B cell (primary cell): ENCODE measurements at regions of chr19 and their contacts with region 1.

Region 1: GRCh38 chr19:4362861-4363510 is 19.6 kb downstream of the MPND start:
- DNase-seq: peak; percentile 48
- ATAC-seq: no peak
- H3K4me3 ChIP-seq: no peak overlapping the region
- H3K4me3 Mint-ChIP-seq: no peak overlapping the region
- H3K27ac ChIP-seq: no peak overlapping the region
- H3K27ac Mint-ChIP-seq: no peak overlapping the region
- H3K4me1 ChIP-seq: peaks cover under 1 to 7% of the 10 kb centered on the region in 2 donors
- H3K4me1 Mint-ChIP-seq: peaks cover 5% of the 10 kb centered on the region
- H3K27me3 ChIP-seq: no peaks in the 10 kb centered on the region
- H3K27me3 Mint-ChIP-seq: no peaks in the 10 kb centered on the region
- CTCF ChIP-seq: no peak

Region 2: GRCh38 chr19:4267101-4267900 is 95.7 kb before region 1 on chr19:
- CTCF ChIA-PET with region 1: no interaction called
- POLR2A ChIA-PET with region 1: interaction called, 10 read pairs
- intact Hi-C with region 1: no loop called
- DNase-seq: peak; percentile 70
- ATAC-seq: peak; percentile 79
- H3K4me3 ChIP-seq: no peak overlapping the region
- H3K4me3 Mint-ChIP-seq: no peak overlapping the region
- H3K27ac ChIP-seq: no peak overlapping the region
- H3K27ac Mint-ChIP-seq: peak overlapping the region; percentile 37
- H3K4me1 ChIP-seq: peaks cover 0 to 11% of the 10 kb centered on the region in 2 donors
- H3K4me1 Mint-ChIP-seq: peaks cover 12% of the 10 kb centered on the region
- H3K27me3 ChIP-seq: no peaks in the 10 kb centered on the region
- H3K27me3 Mint-ChIP-seq: no peaks in the 10 kb centered on the region
- CTCF ChIP-seq: peak; percentile 84

Region 3: GRCh38 chr19:4375164-4376027 is 12.4 kb after region 1 on chr19:
- CTCF ChIA-PET with region 1: interaction called, 5 read pairs
- POLR2A ChIA-PET with region 1: interaction called, 3 read pairs
- intact Hi-C with region 1: loop called (anchors 2 kb)
- DNase-seq: peak; percentile 85
- ATAC-seq: peak; percentile 70
- H3K4me3 ChIP-seq: peak overlapping the region in 3 of 5 experiments; percentile 38 to 56 (median 39)
- H3K4me3 Mint-ChIP-seq: peak overlapping the region; percentile 84
- H3K27ac ChIP-seq: peak overlapping the region; percentile 58 to 63
- H3K27ac Mint-ChIP-seq: peak overlapping the region; percentile 87
- H3K4me1 ChIP-seq: peaks cover 100% of the 10 kb centered on the region in 2 donors
- H3K4me1 Mint-ChIP-seq: peaks cover 88% of the 10 kb centered on the region
- H3K27me3 ChIP-seq: no peaks in the 10 kb centered on the region
- H3K27me3 Mint-ChIP-seq: no peaks in the 10 kb centered on the region
- CTCF ChIP-seq: peak; percentile 63